Right ventricle myocardium inferior (tissue), 1 donor: ENCODE measurements at regions of chr5 and their contacts with region 1.

Region 1: GRCh38 chr5:34957857-34958690 is 28.7 kb downstream of the DNAJC21 start:
- DNase-seq: no peak
- ATAC-seq: no peak

Region 2: GRCh38 chr5:34789021-34789531 is 169.0 kb before region 1 on chr5:
- intact Hi-C with region 1: no loop called
- DNase-seq: no peak
- ATAC-seq: peak; percentile 46

Region 3: GRCh38 chr5:35003018-35003957 is 45.2 kb after region 1 on chr5:
- intact Hi-C with region 1: loop called (anchors 5 kb)
- DNase-seq: no peak
- ATAC-seq: no peak

Region 4: DNA sequence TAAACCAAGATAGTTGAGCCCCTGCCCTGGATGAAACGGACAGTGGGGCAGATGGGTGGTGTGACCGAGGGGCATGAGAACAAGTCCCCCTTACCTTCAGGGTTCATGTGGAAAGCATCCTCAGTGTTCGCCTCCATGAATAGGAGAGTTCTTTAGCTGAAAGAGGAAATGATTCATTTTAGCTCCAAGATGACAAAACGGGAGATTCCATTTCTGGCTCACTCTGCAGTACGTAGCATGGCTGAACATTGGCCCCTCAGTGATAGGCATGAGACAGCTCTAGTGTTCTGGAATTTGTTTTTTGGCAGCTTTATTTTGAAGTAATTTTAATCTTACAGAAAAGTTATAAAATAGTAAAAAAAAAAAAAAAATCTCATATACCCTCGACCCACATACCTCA is 159.9 kb after region 1 on chr5:
- intact Hi-C with region 1: no loop called
- DNase-seq: no peak
- ATAC-seq: no peak

Region 5: DNA sequence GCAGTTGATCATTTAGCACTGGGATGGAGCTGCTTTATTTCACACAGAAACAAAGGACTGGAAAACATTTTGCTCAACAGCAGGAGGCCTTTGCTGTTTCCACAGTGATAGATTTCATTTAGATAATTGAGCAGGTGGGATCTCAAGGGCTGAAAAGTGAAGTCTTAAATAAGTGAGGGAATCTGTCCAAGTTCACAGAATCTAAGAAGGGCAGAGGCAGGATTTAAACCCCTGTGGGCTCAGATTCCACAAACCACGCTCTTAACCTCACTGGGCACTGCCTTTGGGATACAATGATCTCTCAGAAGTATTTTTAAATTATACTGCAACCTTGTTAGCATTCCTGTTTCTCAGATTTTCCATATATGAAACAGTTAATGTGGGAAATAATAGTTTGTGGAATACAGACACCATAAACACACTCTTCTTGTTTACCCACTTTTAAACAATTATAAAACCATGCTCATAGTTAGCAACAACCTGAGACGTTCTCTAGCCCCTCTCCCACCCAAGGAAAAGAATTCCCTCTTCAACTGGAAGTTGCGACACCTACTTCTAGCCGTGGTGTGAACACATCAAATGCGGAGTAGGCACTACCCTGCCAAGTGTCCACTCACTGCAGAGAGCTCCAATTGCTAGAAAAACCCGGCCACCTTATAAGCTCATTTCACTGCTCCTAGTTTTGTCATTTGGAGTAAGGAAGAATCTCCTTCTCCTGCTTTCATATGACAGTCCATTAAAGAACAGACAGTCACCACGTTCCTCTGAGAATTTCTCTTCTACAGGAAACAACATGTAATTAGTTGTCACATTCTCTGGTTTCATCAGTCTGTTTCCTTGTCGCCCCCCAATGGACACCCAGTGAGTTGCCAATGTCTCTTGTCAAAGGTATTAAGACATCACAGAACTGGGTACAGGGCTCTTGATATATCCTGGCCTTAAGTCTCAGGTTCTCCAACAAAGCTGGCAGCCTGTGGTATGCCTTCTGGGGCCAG is 224.8 kb after region 1 on chr5:
- intact Hi-C with region 1: loop called (anchors 5 kb)
- DNase-seq: no peak
- ATAC-seq: peak; percentile 42

Region 6: GRCh38 chr5:35202319-35203111 is 244.4 kb after region 1 on chr5:
- intact Hi-C with region 1: loop called (anchors 5 kb)
- DNase-seq: no peak
- ATAC-seq: peak; percentile 39